Naive thymus-derived CD4-positive, alpha-beta T cell (primary cell): ENCODE measurements at regions of chr16 and their contacts with region 1.

Region 1: DNA sequence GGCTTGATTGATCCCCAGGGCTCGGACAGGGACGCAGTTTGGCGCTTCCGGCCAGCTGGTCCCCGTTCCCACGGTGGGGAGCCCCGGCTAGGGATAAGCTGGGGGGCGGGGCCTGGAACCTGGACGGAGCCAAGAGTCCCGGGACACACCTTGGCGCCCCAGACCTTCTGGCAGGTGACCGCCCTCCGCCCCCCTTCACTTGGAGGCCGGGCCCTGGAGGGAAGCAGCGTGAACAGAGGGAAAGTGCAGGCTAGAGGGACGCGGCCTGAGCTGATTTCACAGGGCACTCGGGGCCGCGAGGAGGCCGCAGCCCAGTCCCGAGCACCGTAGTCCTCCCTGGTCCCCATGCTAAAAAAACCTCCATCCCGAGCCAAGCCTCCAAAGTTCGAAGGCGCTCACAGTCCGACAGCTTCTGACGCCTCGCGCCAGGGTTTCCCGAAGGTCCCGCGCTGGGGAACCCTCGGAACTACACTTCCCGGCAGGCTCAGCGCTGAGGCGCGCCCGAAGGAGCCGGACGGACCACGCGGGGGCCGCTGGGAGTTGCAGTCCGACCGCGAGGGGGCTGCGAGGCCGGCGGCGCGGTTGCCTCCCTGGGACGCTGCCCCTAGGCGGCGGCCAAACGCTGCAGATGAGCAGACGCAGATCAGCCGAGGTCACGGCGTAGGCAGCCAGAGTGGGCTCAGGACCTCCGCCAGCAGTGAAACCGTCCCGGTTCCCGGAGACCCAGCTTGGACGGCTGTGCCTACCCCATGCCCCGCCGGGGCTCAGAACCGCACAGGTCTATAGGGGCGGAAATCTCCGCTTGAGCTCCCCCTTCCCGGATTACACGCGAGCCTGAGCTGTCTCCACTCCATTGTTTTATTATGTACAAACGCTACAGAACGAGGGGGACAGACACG is at the start of gene TBX6:
- DNase-seq: peak; percentile 85 to 96 (median 91)
- ATAC-seq: peak; percentile 87
- H3K4me3 ChIP-seq: peak within 1 kb of the TSS; percentile 60
- H3K4me3 Mint-ChIP-seq: peak within 1 kb of the TSS; percentile 87 to 96 (median 93)
- H3K27ac ChIP-seq: peak within 1 kb of the TSS; percentile 77
- H3K27ac Mint-ChIP-seq: peak within 1 kb of the TSS; percentile 92 to 97 (median 95)
- H3K4me1 ChIP-seq: peaks cover 32 to 47% of the 10 kb centered on the region in 2 donors
- H3K4me1 Mint-ChIP-seq: peaks cover 43 to 65% (median 50%) of the 10 kb centered on the region in 7 donors
- H3K27me3 ChIP-seq: no peaks in the 10 kb centered on the region
- H3K27me3 Mint-ChIP-seq: no peaks in the 10 kb centered on the region
- total RNA-seq, gene TBX6: 1.5 to 3.3 (median 1.6) TPM

Region 2: DNA sequence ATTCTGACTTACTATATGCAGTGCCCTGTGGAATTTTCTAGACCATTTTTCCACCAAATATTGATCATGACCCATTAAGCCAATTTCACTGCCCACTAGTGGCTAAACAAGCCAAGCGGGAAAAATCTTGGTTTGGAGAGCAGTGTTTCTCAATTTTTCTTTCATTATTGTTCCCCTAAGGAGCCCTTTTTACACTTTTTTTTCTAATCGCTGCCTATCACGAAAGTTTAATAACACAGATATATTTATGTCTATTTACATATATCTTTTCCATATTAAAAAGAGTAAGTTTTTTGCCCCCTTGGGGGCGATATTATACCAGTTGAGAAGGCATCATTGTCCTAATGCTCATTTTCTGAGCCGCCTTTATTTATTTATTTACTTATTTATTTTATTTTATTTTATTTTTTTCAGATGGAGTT is 49.9 kb before region 1 on chr16:
- CTCF ChIA-PET with region 1: interaction called, 3 read pairs
- POLR2A ChIA-PET with region 1: interaction called, 4 read pairs
- intact Hi-C with region 1: loop called in 1 of 2 experiments (anchors 1 kb)
- DNase-seq: peak in 3 of 9 donors; percentile 40 to 44 (median 42)
- ATAC-seq: no peak
- H3K4me3 ChIP-seq: no peak overlapping the region
- H3K4me3 Mint-ChIP-seq: no peak overlapping the region
- H3K27ac ChIP-seq: no peak overlapping the region
- H3K27ac Mint-ChIP-seq: no peak overlapping the region
- H3K4me1 ChIP-seq: no peaks in the 10 kb centered on the region
- H3K4me1 Mint-ChIP-seq: peaks cover 0 to 7% (median 0%) of the 10 kb centered on the region in 7 donors
- H3K27me3 ChIP-seq: no peaks in the 10 kb centered on the region
- H3K27me3 Mint-ChIP-seq: peaks cover 0 to 21% (median 0%) of the 10 kb centered on the region in 5 donors

Region 3: GRCh38 chr16:30075507-30076275 is 16.0 kb before region 1 on chr16 and contains the start of gene PPP4C:
- CTCF ChIA-PET with region 1: interaction called, 18 read pairs
- POLR2A ChIA-PET with region 1: interaction called, 177 read pairs
- intact Hi-C with region 1: loop called (anchors 1 kb)
- DNase-seq: peak; percentile 82 to 92 (median 89)
- ATAC-seq: peak; percentile 94
- H3K4me3 ChIP-seq: peak within 1 kb of the TSS; percentile 75
- H3K4me3 Mint-ChIP-seq: peak within 1 kb of the TSS; percentile 90 to 99 (median 95)
- H3K27ac ChIP-seq: peak within 1 kb of the TSS; percentile 85
- H3K27ac Mint-ChIP-seq: peak within 1 kb of the TSS; percentile 92 to 98 (median 96)
- H3K4me1 ChIP-seq: peaks cover 20 to 21% of the 10 kb centered on the region in 2 donors
- H3K4me1 Mint-ChIP-seq: peaks cover 23 to 59% (median 41%) of the 10 kb centered on the region in 7 donors
- H3K27me3 ChIP-seq: no peaks in the 10 kb centered on the region
- H3K27me3 Mint-ChIP-seq: peaks cover 0 to 2% (median 0%) of the 10 kb centered on the region in 5 donors
- total RNA-seq, gene PPP4C: 68.4 to 143 (median 86.0) TPM

Region 4: GRCh38 chr16:30122604-30123160 is 31.0 kb after region 1 on chr16:
- CTCF ChIA-PET with region 1: interaction called, 3 read pairs
- POLR2A ChIA-PET with region 1: interaction called, 12 read pairs
- intact Hi-C with region 1: loop called (anchors 1 kb)
- DNase-seq: peak in 2 of 9 donors; percentile 19 to 35
- ATAC-seq: peak; percentile 2
- H3K4me3 ChIP-seq: peak overlapping the region; percentile 68
- H3K4me3 Mint-ChIP-seq: peak overlapping the region; percentile 82 to 94 (median 88)
- H3K27ac ChIP-seq: peak overlapping the region; percentile 89
- H3K27ac Mint-ChIP-seq: peak overlapping the region; percentile 75 to 93 (median 85)
- H3K4me1 ChIP-seq: peaks cover 6 to 13% of the 10 kb centered on the region in 2 donors
- H3K4me1 Mint-ChIP-seq: peaks cover 20 to 39% (median 27%) of the 10 kb centered on the region in 7 donors
- H3K27me3 ChIP-seq: no peaks in the 10 kb centered on the region
- H3K27me3 Mint-ChIP-seq: no peaks in the 10 kb centered on the region

Region 5: GRCh38 chr16:30335598-30336474 is 244.1 kb after region 1 on chr16:
- CTCF ChIA-PET with region 1: no interaction called
- POLR2A ChIA-PET with region 1: no interaction called
- intact Hi-C with region 1: loop called in 1 of 2 experiments (anchors 10 kb)
- DNase-seq: peak in 1 of 9 donors; percentile 26
- ATAC-seq: no peak
- H3K4me3 ChIP-seq: peak overlapping the region; percentile 50
- H3K4me3 Mint-ChIP-seq: peak overlapping the region; percentile 80 to 96 (median 87)
- H3K27ac ChIP-seq: peak overlapping the region; percentile 74
- H3K27ac Mint-ChIP-seq: peak overlapping the region; percentile 57 to 91 (median 81)
- H3K4me1 ChIP-seq: peaks cover 7% of the 10 kb centered on the region in 2 donors
- H3K4me1 Mint-ChIP-seq: peaks cover 3 to 30% (median 17%) of the 10 kb centered on the region in 7 donors
- H3K27me3 ChIP-seq: no peaks in the 10 kb centered on the region
- H3K27me3 Mint-ChIP-seq: no peaks in the 10 kb centered on the region

Region 6: DNA sequence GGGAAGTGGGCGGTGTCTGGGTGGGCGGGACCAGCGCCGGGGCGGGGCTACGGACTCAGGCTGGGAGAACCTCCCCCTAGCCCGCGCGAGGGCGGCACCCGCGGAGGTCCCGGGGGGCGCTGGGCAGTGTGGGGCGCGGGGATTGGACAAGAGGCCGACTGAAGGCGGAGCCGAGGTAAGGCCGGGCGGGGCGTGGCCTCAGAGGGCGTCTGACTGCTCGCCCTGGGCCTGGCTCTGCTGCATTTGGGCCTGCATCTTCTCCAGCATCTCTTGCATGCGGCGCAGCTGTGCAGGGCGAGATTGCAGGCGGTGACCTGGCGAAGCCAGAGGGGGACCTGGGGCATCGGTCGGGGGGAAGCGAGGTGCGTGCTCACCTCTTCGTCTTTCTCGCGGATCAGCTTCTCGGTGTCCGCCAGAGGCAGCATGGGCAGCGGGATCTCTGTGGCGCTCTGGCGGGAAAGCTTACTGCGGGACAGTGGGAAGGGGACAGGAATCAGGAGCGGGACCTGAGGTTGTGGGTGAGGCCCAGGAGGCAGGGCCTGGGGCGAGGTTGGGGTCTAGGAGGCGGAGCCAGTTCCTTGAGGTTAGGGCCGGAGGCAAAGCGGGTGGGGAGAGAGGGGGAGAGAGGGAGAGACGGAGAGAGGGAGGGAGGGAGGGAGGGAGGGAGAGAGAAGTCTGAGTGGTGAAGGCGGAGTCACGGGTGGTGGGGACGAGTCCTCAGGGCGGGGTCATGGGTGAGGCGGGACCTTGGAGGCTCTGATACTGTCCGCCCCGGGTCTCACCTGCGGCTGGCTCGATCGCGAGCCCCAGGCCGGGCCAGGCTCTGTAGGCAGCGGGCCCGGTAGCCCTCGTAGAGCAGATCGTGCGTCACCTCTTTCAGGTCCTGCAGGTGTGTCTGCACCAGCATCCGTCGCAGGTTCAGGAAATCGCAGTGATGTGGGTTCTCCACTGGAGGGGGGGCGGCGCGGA is 286.8 kb after region 1 on chr16:
- CTCF ChIA-PET with region 1: no interaction called
- POLR2A ChIA-PET with region 1: interaction called, 31 read pairs
- intact Hi-C with region 1: loop called (anchors 2 to 10 kb)
- DNase-seq: peak; percentile 97 to 99 (median 99)
- ATAC-seq: peak; percentile 91
- H3K4me3 ChIP-seq: peak overlapping the region; percentile 88
- H3K4me3 Mint-ChIP-seq: peak overlapping the region; percentile 90 to 100 (median 97)
- H3K27ac ChIP-seq: peak overlapping the region; percentile 100
- H3K27ac Mint-ChIP-seq: peak overlapping the region; percentile 98 to 100 (median 100)
- H3K4me1 ChIP-seq: peaks cover 54 to 56% of the 10 kb centered on the region in 2 donors
- H3K4me1 Mint-ChIP-seq: peaks cover 32 to 61% (median 49%) of the 10 kb centered on the region in 7 donors
- H3K27me3 ChIP-seq: no peaks in the 10 kb centered on the region
- H3K27me3 Mint-ChIP-seq: no peaks in the 10 kb centered on the region